ENCODE measurements at regions of chr4 and their contacts with region 1.

Region 1: GRCh38 chr4:80335554-80336358 is at the start of gene CFAP299:
- DNase-seq: peak; percentile 86 to 96 (median 90)
- ATAC-seq: peak; percentile 97
- H3K4me3 ChIP-seq: peak within 1 kb of the TSS; percentile 51
- H3K27ac ChIP-seq: peak within 1 kb of the TSS; percentile 52
- H3K4me1 ChIP-seq: peaks cover 5 to 9% of the 10 kb centered on the region in 2 experiments; a peak in 3 of 5 replicates
- H3K27me3 ChIP-seq: no peaks in the 10 kb centered on the region
- CTCF ChIP-seq: peak; percentile 67 to 81 (median 78)
- EP300 ChIP-seq: no peak
- POLR2A ChIP-seq: no peak
- RAD21 ChIP-seq: peak; percentile 73 to 77
- polyA plus RNA-seq, gene CFAP299: 0.69 to 0.78 TPM

Region 2: DNA sequence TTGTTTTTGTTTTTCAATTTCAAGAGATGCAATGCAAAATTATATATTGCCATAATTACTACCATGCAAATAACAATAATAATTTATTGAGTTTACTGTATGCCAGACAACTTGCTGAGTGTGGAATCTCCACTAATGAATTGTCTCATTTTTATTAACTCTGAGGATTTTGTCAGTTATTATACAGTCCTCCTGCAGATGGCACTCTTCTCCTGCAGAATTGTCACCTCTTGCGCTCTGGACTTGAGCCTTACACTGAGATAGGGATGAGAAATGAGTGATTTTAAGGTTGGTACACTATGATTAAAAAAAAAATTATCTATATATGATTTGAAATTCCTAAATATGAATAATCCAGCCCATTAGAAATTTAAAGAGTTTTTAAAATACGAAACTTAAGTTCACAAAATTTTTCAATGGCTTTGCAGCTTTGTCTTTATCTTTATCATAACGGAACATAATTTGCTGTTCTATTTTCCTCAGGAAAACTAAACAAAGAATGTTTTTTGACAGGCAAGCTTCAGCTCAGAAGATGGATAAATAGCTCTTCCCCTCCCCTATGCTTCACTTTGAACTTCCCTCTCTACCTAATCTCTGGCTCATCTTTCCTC is 1383.8 kb before region 1 on chr4:
- CTCF ChIA-PET with region 1: interaction called, 7 read pairs
- POLR2A ChIA-PET with region 1: no interaction called
- in situ Hi-C with region 1: loop called (anchors 5 kb)
- intact Hi-C with region 1: loop called (anchors 1 kb)
- DNase-seq: peak; percentile 56 to 70 (median 58)
- ATAC-seq: peak; percentile 86
- H3K4me3 ChIP-seq: no peak overlapping the region
- H3K27ac ChIP-seq: no peak overlapping the region
- H3K4me1 ChIP-seq: peaks cover 0 to 4% of the 10 kb centered on the region in 2 experiments; a peak in 1 of 5 replicates
- H3K27me3 ChIP-seq: no peaks in the 10 kb centered on the region
- CTCF ChIP-seq: peak; percentile 58 to 84 (median 73)
- EP300 ChIP-seq: no peak
- POLR2A ChIP-seq: no peak
- RAD21 ChIP-seq: peak; percentile 76 to 91

Region 3: DNA sequence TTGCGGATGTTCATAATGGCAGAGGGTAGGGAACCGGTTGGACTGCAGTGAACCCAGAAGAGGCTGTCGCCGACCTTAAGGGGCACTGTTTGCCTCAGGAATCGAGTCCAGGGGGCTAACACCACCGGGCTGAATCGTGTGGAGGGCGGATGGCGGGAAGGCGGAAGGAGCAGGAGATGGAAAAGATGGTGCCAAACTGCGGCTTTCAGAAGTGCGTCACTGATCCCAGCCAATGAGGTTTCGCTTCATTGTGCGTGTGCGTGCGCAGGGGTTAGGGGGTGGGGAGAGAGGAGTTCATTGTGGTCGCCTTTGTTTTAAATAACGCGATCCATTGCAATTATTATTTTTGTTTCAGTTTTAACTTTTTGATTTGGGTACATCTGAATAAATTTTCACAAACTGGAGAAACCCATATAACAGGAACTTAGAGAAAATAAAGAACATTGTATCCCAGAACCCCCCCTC is 1009.9 kb before region 1 on chr4 and contains the start of gene NAA11:
- CTCF ChIA-PET with region 1: no interaction called
- POLR2A ChIA-PET with region 1: no interaction called
- in situ Hi-C with region 1: no loop called
- intact Hi-C with region 1: loop called (anchors 10 kb)
- DNase-seq: peak; percentile 67 to 79 (median 74)
- ATAC-seq: peak; percentile 88
- H3K4me3 ChIP-seq: peak within 1 kb of the TSS; percentile 53
- H3K27ac ChIP-seq: peak within 1 kb of the TSS; percentile 77
- H3K4me1 ChIP-seq: peaks cover 0 to 7% of the 10 kb centered on the region in 2 experiments; a peak in 4 of 5 replicates
- H3K27me3 ChIP-seq: no peaks in the 10 kb centered on the region
- CTCF ChIP-seq: no peak
- EP300 ChIP-seq: no peak
- POLR2A ChIP-seq: peak; percentile 70
- RAD21 ChIP-seq: no peak
- polyA plus RNA-seq, gene NAA11: 17.1 to 22.7 TPM

Region 4: DNA sequence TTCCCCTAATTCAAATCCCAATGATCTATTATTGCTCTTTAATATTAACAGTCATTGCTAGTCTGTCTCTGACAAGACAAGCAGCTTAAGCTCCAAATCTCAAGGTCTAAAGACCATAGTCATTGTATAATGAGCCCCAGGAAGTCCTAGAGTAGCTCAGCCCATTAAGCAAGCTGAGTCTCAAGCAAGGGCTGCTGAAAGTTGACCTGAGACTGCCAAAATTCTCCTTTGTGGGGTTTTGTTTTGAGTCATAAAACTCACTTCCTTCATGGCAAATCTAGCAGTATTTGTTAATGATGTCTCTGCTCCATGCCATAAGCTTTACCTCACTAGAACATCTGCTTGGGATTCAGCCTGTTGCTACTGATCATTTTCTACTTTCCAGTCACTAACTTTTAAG is 576.0 kb before region 1 on chr4:
- CTCF ChIA-PET with region 1: no interaction called
- POLR2A ChIA-PET with region 1: no interaction called
- in situ Hi-C with region 1: no loop called
- intact Hi-C with region 1: loop called (anchors 10 kb)
- DNase-seq: no peak
- ATAC-seq: no peak
- H3K4me3 ChIP-seq: no peak overlapping the region
- H3K27ac ChIP-seq: no peak overlapping the region
- H3K4me1 ChIP-seq: peaks cover 0 to 4% of the 10 kb centered on the region in 2 experiments; a peak in 2 of 5 replicates
- H3K27me3 ChIP-seq: no peaks in the 10 kb centered on the region
- CTCF ChIP-seq: no peak
- EP300 ChIP-seq: no peak
- POLR2A ChIP-seq: no peak
- RAD21 ChIP-seq: no peak

Region 5: GRCh38 chr4:80072744-80073472 is 262.8 kb before region 1 on chr4 and contains the start of gene ANTXR2:
- CTCF ChIA-PET with region 1: no interaction called
- POLR2A ChIA-PET with region 1: no interaction called
- in situ Hi-C with region 1: no loop called
- intact Hi-C with region 1: loop called (anchors 5 kb)
- DNase-seq: peak; percentile 82 to 90 (median 85)
- ATAC-seq: peak; percentile 93
- H3K4me3 ChIP-seq: peak within 1 kb of the TSS; percentile 89
- H3K27ac ChIP-seq: peak within 1 kb of the TSS; percentile 87
- H3K4me1 ChIP-seq: peaks cover 12 to 27% of the 10 kb centered on the region in 2 experiments; a peak in 4 of 5 replicates
- H3K27me3 ChIP-seq: no peaks in the 10 kb centered on the region
- CTCF ChIP-seq: no peak
- EP300 ChIP-seq: peak; percentile 38; the same call in 1 of the 2 replicates
- POLR2A ChIP-seq: peak; percentile 77
- RAD21 ChIP-seq: peak in 1 of 2 experiments; percentile 27; a peak in 3 of 4 replicates
- polyA plus RNA-seq, gene ANTXR2: 10.1 to 26.6 TPM

Region 6: GRCh38 chr4:80204433-80205011 is 131.2 kb before region 1 on chr4:
- CTCF ChIA-PET with region 1: no interaction called
- POLR2A ChIA-PET with region 1: no interaction called
- in situ Hi-C with region 1: no loop called
- intact Hi-C with region 1: no loop called
- DNase-seq: no peak
- ATAC-seq: no peak
- H3K4me3 ChIP-seq: no peak overlapping the region
- H3K27ac ChIP-seq: no peak overlapping the region
- H3K4me1 ChIP-seq: peaks cover 0 to 6% of the 10 kb centered on the region in 2 experiments; a peak in 1 of 5 replicates
- H3K27me3 ChIP-seq: no peaks in the 10 kb centered on the region; a peak in 1 of 5 replicates
- CTCF ChIP-seq: no peak
- EP300 ChIP-seq: no peak
- POLR2A ChIP-seq: no peak
- RAD21 ChIP-seq: no peak

Region 7: GRCh38 chr4:80266253-80266901 is 69.4 kb before region 1 on chr4 and contains the start of gene FGF5:
- CTCF ChIA-PET with region 1: no interaction called
- POLR2A ChIA-PET with region 1: no interaction called
- in situ Hi-C with region 1: no loop called
- intact Hi-C with region 1: loop called (anchors 5 kb)
- DNase-seq: peak; percentile 84 to 88 (median 84)
- ATAC-seq: peak; percentile 91
- H3K4me3 ChIP-seq: peak within 1 kb of the TSS; percentile 53
- H3K27ac ChIP-seq: peak within 1 kb of the TSS; percentile 65
- H3K4me1 ChIP-seq: peaks cover 17 to 26% of the 10 kb centered on the region in 2 experiments; a peak in 4 of 5 replicates
- H3K27me3 ChIP-seq: no peaks in the 10 kb centered on the region
- CTCF ChIP-seq: no peak
- EP300 ChIP-seq: no peak
- POLR2A ChIP-seq: peak; percentile 79
- RAD21 ChIP-seq: no peak
- polyA plus RNA-seq, gene FGF5: 0.38 to 0.61 TPM

Region 8: DNA sequence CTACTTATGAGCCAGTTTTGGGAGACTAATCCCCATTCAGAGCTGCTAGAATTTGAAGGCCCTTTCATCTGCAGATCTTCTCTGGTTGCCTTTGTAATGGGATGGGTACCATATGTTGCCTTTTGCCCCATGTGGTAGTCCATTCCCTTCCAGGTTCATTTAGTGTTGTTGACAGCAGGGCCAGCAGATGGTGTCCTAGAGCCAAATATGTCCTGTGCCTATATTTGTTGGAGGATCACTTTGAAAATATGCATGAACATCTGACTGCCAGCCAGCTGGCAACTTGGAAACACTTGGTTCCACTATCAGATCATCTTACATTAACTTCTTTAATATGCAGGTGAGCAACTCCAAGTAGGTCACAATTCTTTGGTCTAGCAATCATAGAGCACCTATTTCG is 30.2 kb after region 1 on chr4:
- CTCF ChIA-PET with region 1: no interaction called
- POLR2A ChIA-PET with region 1: no interaction called
- in situ Hi-C with region 1: no loop called
- intact Hi-C with region 1: no loop called
- DNase-seq: peak in 3 of 4 experiments; percentile 17 to 53 (median 41)
- ATAC-seq: peak; percentile 87
- H3K4me3 ChIP-seq: no peak overlapping the region
- H3K27ac ChIP-seq: no peak overlapping the region
- H3K4me1 ChIP-seq: no peaks in the 10 kb centered on the region
- H3K27me3 ChIP-seq: no peaks in the 10 kb centered on the region
- CTCF ChIP-seq: peak; percentile 69 to 76 (median 73)
- EP300 ChIP-seq: no peak
- POLR2A ChIP-seq: no peak
- RAD21 ChIP-seq: peak; percentile 91 to 93

Measured in K562 (cell line).